ENCODE measurements at regions of chr12 and their contacts with region 1.

Region 1: GRCh38 chr12:116673681-116674111 is 64.2 kb downstream of the SPRING1 start:
- DNase-seq: no peak
- ATAC-seq: no peak
- H3K4me3 ChIP-seq: no peak overlapping the region
- H3K27ac ChIP-seq: no peak overlapping the region
- H3K4me1 ChIP-seq: 0 out of 2 replicates have a peak, but pooled peaks cover 2% of the 10 kb centered on the region
- H3K27me3 ChIP-seq: no peaks in the 10 kb centered on the region
- CTCF ChIP-seq: no peak; the same call in 1 of the 2 replicates

Region 2: GRCh38 chr12:116466536-116466935 is 207.2 kb before region 1 on chr12:
- CTCF ChIA-PET with region 1: no interaction called
- POLR2A ChIA-PET with region 1: interaction called, 11 read pairs
- in situ Hi-C with region 1: no loop called
- intact Hi-C with region 1: no loop called
- DNase-seq: no peak
- ATAC-seq: no peak
- H3K4me3 ChIP-seq: no peak overlapping the region
- H3K27ac ChIP-seq: peak overlapping the region; percentile 39; the same call in 1 of the 2 replicates
- H3K4me1 ChIP-seq: peaks cover 8% of the 10 kb centered on the region
- H3K27me3 ChIP-seq: no peaks in the 10 kb centered on the region
- CTCF ChIP-seq: no peak

Region 3: DNA sequence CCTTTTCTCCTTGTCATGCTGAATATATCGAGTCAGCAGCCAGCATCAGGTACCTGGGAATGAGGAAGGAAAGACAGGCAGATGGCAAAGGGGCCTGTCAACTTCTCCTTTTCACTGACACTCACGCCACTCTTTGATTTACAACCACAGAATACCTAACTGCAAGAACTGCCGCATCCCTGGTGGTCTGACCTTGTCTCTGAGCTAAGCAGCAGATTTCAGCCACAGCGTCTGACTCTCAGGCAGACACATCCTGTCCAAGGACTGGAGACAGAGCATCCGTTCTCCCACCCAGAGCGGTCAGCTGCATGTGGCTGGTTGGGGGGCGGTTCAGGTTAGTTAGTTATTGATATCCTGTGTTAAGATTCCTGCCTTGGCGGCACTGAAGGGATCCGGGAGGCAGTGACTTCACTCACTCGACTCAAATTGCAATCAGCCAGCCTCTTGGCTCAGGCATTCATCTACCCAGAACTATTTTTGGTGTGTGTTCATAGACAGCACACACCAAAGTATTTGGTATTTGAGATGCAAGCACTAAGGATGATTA is 125.7 kb before region 1 on chr12:
- CTCF ChIA-PET with region 1: no interaction called
- POLR2A ChIA-PET with region 1: no interaction called
- in situ Hi-C with region 1: no loop called
- intact Hi-C with region 1: no loop called
- DNase-seq: no peak
- ATAC-seq: peak; percentile 28; the same call in 1 of the 2 replicates
- H3K4me3 ChIP-seq: no peak overlapping the region
- H3K27ac ChIP-seq: no peak overlapping the region
- H3K4me1 ChIP-seq: peaks cover under 1% of the 10 kb centered on the region; the same call in 1 of the 2 replicates
- H3K27me3 ChIP-seq: no peaks in the 10 kb centered on the region
- CTCF ChIP-seq: no peak

Region 4: DNA sequence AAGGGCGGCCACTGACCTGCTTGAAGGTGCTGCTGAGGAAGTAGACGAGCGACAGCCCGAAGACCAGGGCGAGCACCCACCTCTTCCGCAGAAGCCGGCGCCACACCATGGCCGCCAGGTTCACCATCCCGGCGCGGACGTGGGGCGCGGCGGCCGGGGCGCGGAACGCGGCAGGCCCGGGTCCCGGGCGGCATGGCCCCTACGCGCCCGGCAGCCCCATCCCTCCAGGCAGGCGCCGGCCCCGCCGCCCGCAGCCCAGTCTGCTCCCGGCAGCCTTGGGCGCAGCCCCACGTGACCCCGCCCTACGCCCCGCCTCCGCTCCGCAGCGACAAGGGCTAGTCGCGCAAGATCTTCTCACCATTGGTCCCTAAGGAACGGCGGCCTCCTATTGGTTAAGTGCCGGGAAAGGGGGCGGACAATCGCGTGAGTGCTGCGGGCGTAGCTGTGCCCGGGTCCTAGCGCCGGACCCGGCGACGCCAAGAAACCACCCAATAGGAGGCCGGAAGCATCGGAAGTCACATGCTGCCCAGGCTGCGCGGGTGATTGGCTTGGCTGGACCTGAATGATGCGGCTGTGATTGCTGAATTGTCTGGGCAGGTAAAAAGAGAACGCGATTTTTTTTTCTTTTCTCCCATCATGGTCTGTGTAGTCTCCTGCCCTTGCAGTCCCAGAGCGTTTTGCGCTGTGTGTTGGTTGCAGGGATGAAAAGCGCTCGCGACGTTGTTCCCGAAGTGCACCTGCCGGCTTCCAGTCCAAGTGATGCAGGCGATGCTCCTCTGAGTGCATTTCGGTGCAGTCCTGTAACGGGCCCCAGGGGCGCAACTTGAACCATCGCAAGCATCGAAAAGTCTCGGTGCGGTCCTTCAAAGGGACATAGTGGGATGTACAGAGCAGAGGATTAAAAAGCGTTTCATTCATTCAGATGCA is 64.3 kb after region 1 on chr12 and contains the starts of genes RNFT2 and SPRING1:
- CTCF ChIA-PET with region 1: no interaction called
- POLR2A ChIA-PET with region 1: no interaction called
- in situ Hi-C with region 1: no loop called
- intact Hi-C with region 1: no loop called
- DNase-seq: peak; percentile 92
- ATAC-seq: peak; percentile 99
- H3K4me3 ChIP-seq: peak within 1 kb of the TSS; percentile 90 to 92
- H3K27ac ChIP-seq: peak within 1 kb of the TSS; percentile 74
- H3K4me1 ChIP-seq: peaks cover 17% of the 10 kb centered on the region
- H3K27me3 ChIP-seq: no peaks in the 10 kb centered on the region
- CTCF ChIP-seq: no peak
- total RNA-seq, gene RNFT2: 12.3 TPM
- total RNA-seq, gene SPRING1: 71.1 TPM